ENCODE measurements at regions of chr7 and their contacts with region 1.

Region 1: GRCh38 chr7:67566101-67566500 is 569.5 kb downstream of the TYW1 start:
- H3K4me3 ChIP-seq: no peak overlapping the region
- H3K27ac ChIP-seq: no peak overlapping the region
- H3K4me1 ChIP-seq: no peaks in the 10 kb centered on the region
- CTCF ChIP-seq: no peak

Region 2: DNA sequence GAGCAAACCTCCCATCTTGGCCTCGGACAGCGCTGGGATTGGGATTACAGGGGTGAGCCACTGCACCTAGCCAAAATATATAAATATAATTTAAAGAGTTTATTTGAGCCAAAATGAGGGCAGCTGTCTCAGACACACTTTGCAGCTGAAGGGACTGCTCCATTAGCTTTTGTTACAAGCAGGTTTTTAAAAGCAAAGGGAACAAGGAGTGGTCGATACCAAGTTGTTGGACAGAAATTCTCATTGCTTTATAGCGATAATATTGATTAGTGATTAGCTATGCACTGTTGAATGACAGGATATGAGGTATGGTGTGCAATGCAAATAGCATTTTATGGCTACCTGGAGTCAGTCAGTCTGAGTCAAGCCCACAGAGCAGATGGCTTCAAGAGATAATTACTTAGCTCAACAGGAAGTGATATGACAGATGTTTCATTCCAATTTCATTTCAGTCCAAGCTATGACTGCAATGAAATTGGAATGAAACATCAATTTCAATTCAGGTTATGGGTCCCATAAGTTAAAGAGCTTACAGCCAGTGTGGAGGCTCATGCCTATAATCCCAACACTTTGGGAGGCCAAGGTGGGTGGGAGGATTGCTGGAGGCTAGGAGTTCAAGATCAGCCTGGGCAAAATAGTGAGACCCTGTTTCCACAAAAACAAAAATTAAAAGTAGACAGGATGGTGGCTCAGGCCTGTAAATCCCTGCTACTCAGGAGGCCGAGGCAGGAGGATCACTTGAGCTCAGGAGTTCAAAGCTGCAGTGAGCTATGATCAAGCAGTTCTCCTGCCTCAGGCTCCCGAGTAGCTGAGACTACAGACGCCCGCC is 546.3 kb before region 1 on chr7:
- CTCF ChIA-PET with region 1: no interaction called
- POLR2A ChIA-PET with region 1: no interaction called
- H3K4me3 ChIP-seq: no peak overlapping the region
- H3K27ac ChIP-seq: no peak overlapping the region
- H3K4me1 ChIP-seq: no peaks in the 10 kb centered on the region
- CTCF ChIP-seq: no peak

Region 3: DNA sequence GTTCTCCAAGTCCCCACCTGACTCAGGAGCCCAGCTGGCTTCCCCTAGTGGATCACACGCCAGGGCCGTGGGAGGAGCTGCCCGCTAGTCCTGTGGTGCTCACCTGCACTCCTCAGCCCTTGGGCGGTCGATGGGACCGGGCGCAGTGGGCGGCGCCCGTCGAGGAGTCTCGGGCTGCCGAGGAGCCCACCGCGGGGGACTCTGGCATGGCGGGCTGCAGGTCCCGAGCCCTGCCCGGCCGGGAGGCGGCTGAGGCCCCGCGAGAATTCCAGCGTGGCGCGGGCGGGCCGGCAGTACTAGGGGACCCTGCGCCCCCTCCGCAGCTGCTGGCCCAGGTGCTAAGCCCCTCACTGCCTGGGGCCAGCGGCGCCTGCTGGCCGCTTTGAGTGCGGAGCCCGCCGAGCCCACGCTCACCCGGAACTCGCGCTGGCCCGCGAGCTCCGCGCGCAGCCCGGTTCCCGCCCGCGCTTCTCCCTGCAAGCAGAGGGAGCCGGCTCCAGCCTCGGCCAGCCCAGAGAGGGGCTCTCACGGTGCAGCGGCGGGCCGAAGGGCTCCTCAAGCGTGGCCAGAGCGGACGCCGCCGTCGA is 201.6 kb before region 1 on chr7:
- CTCF ChIA-PET with region 1: no interaction called
- POLR2A ChIA-PET with region 1: interaction called, 10 read pairs
- H3K4me3 ChIP-seq: no peak overlapping the region
- H3K27ac ChIP-seq: no peak overlapping the region
- H3K4me1 ChIP-seq: no peaks in the 10 kb centered on the region
- CTCF ChIP-seq: no peak

Region 4: GRCh38 chr7:67375427-67375826 is 190.7 kb before region 1 on chr7:
- CTCF ChIA-PET with region 1: no interaction called
- POLR2A ChIA-PET with region 1: no interaction called
- H3K4me3 ChIP-seq: no peak overlapping the region
- H3K27ac ChIP-seq: no peak overlapping the region
- H3K4me1 ChIP-seq: no peaks in the 10 kb centered on the region
- CTCF ChIP-seq: no peak

Region 5: DNA sequence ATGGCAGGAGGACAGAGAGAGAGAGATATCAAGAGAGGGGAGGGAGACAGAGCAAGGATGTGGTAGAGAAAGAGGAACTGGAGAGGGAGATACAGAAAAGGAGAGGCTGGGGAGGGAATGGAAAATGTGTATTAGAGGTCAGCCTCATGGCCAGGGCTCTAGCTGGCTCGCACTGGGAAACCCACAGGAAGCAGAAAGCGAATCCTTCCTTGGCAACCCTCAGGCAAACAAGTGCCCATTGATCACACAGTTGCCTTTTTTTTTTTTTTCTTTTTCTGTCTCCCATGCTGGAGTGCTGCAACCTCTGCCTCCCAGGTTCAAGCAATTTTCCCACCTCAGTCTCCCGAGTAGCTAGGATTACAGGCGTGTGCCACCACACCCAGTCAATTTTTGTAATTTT is 178.2 kb before region 1 on chr7:
- CTCF ChIA-PET with region 1: no interaction called
- POLR2A ChIA-PET with region 1: no interaction called
- H3K4me3 ChIP-seq: no peak overlapping the region
- H3K27ac ChIP-seq: no peak overlapping the region
- H3K4me1 ChIP-seq: no peaks in the 10 kb centered on the region
- CTCF ChIP-seq: no peak

Region 6: DNA sequence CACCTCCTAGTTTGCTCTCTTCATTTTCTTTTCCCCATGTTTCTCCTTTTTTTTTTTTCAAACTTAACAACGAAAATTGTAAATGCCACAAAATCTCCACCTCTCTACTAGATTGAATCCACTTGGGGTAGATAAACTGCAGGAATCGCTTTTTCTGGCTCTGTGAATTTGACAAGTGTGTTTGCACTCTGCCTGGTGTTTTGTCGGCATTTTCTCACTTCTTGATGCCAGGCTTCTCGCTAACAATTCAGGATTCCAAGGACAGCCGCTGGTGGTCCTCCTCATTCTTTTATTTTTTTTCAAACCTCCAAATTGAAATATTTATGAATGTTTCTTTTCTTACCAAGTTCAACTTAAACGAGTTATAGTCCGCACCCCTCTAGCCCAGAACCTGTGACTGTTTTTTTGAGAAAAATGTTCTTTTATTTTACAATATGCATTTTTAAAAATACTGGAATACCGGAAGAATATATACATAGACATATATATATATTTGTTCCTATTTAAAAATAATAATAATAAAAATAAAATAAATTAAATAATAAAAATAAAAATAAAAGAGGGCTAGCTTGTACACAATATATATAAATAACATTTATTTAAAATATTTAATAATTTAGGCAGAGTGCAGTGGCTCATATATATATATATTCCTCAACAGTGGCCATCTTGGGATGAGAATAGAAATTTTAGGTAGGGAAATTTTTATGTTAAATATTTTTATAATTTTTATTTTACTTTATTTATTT is 30.7 kb before region 1 on chr7:
- CTCF ChIA-PET with region 1: no interaction called
- POLR2A ChIA-PET with region 1: no interaction called
- H3K4me3 ChIP-seq: no peak overlapping the region
- H3K27ac ChIP-seq: no peak overlapping the region
- H3K4me1 ChIP-seq: no peaks in the 10 kb centered on the region
- CTCF ChIP-seq: no peak